ENCODE measurements at regions of chr20 and their contacts with region 1.

Region 1: GRCh38 chr20:60400567-60400966 is 442.3 kb downstream of the CDH26 start:
- DNase-seq: no peak
- H3K4me3 ChIP-seq: no peak overlapping the region
- H3K4me3 Mint-ChIP-seq: no peak overlapping the region
- H3K27ac Mint-ChIP-seq: no peak overlapping the region
- H3K4me1 ChIP-seq: no peaks in the 10 kb centered on the region
- H3K4me1 Mint-ChIP-seq: no peaks in the 10 kb centered on the region
- H3K27me3 ChIP-seq: no peaks in the 10 kb centered on the region
- H3K27me3 Mint-ChIP-seq: peaks cover 23% of the 10 kb centered on the region
- CTCF ChIP-seq: no peak

Region 2: DNA sequence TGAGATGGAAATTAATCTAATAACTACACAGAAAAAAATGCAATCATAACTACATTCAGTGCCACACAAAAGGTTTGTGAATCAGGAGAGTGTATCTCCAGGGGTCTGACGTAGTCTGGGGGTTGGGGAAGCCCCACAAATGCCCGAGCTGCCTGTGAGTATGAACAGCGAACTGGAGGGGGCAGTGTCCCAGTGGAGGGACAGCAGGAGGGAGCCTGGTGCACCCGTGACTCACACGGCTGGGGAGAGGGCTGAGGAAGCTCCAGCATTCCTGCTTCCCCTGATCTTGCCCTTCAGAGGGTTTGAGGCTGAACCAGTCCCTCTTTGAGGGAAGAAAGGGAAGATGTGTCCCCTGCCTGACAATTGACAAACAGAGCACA is 363.5 kb before region 1 on chr20:
- CTCF ChIA-PET with region 1: no interaction called
- POLR2A ChIA-PET with region 1: no interaction called
- intact Hi-C with region 1: no loop called
- DNase-seq: peak in 1 of 2 experiments; percentile 47
- H3K4me3 ChIP-seq: no peak overlapping the region
- H3K4me3 Mint-ChIP-seq: no peak overlapping the region
- H3K27ac Mint-ChIP-seq: no peak overlapping the region
- H3K4me1 ChIP-seq: peaks cover 49% of the 10 kb centered on the region
- H3K4me1 Mint-ChIP-seq: peaks cover 64% of the 10 kb centered on the region
- H3K27me3 ChIP-seq: no peaks in the 10 kb centered on the region
- H3K27me3 Mint-ChIP-seq: no peaks in the 10 kb centered on the region
- CTCF ChIP-seq: no peak

Region 3: GRCh38 chr20:60420676-60421229 is 20.2 kb after region 1 on chr20:
- CTCF ChIA-PET with region 1: no interaction called
- POLR2A ChIA-PET with region 1: no interaction called
- intact Hi-C with region 1: loop called (anchors 1 kb)
- DNase-seq: no peak
- H3K4me3 ChIP-seq: no peak overlapping the region
- H3K4me3 Mint-ChIP-seq: no peak overlapping the region
- H3K27ac Mint-ChIP-seq: no peak overlapping the region
- H3K4me1 ChIP-seq: no peaks in the 10 kb centered on the region
- H3K4me1 Mint-ChIP-seq: no peaks in the 10 kb centered on the region
- H3K27me3 ChIP-seq: no peaks in the 10 kb centered on the region
- H3K27me3 Mint-ChIP-seq: peaks cover 15% of the 10 kb centered on the region
- CTCF ChIP-seq: no peak

Region 4: GRCh38 chr20:60528141-60528540 is 127.6 kb after region 1 on chr20:
- CTCF ChIA-PET with region 1: no interaction called
- POLR2A ChIA-PET with region 1: no interaction called
- intact Hi-C with region 1: no loop called
- DNase-seq: no peak
- H3K4me3 ChIP-seq: no peak overlapping the region
- H3K4me3 Mint-ChIP-seq: no peak overlapping the region
- H3K27ac Mint-ChIP-seq: no peak overlapping the region
- H3K4me1 ChIP-seq: no peaks in the 10 kb centered on the region
- H3K4me1 Mint-ChIP-seq: no peaks in the 10 kb centered on the region
- H3K27me3 ChIP-seq: no peaks in the 10 kb centered on the region
- H3K27me3 Mint-ChIP-seq: peaks cover 17% of the 10 kb centered on the region
- CTCF ChIP-seq: no peak

Region 5: DNA sequence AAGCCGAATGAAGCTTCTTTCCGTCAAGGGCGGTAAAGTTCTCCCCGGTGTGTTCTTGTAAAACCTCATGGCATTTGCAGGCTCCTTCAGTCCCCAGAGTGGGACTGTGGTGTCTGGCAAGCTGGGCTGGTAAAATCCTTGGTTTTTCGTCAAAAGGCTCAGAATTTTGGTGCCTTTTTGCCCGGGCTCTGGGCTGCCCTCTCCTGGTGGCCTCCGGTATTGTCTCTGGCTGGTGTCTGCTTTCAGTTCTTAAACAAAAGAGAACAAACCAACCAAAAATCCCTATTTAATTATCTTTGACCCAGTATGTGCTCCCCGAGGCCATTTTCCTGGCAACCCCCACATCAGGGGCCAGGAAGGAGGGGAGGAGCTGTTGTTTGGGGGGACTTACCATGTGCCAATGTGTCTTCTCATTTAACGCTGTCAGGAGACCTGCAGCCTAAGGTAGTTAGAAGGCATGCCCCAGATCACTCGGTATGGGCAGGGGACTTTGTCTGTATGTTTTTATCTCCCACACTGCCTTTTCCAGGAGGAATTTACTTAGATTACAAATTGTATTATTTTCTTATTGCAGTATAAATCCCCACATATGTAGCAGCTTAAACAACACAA is 862.6 kb after region 1 on chr20:
- CTCF ChIA-PET with region 1: no interaction called
- POLR2A ChIA-PET with region 1: no interaction called
- intact Hi-C with region 1: no loop called
- DNase-seq: peak in 1 of 2 experiments; percentile 66
- H3K4me3 ChIP-seq: no peak overlapping the region
- H3K4me3 Mint-ChIP-seq: no peak overlapping the region
- H3K27ac Mint-ChIP-seq: no peak overlapping the region
- H3K4me1 ChIP-seq: no peaks in the 10 kb centered on the region
- H3K4me1 Mint-ChIP-seq: no peaks in the 10 kb centered on the region
- H3K27me3 ChIP-seq: no peaks in the 10 kb centered on the region
- H3K27me3 Mint-ChIP-seq: peaks cover 8% of the 10 kb centered on the region
- CTCF ChIP-seq: peak; percentile 77 to 99

Measured in Caco-2 (cell line).